GM12878 (cell line): ENCODE measurements at regions of chr5 and their contacts with region 1.

Region 1: DNA sequence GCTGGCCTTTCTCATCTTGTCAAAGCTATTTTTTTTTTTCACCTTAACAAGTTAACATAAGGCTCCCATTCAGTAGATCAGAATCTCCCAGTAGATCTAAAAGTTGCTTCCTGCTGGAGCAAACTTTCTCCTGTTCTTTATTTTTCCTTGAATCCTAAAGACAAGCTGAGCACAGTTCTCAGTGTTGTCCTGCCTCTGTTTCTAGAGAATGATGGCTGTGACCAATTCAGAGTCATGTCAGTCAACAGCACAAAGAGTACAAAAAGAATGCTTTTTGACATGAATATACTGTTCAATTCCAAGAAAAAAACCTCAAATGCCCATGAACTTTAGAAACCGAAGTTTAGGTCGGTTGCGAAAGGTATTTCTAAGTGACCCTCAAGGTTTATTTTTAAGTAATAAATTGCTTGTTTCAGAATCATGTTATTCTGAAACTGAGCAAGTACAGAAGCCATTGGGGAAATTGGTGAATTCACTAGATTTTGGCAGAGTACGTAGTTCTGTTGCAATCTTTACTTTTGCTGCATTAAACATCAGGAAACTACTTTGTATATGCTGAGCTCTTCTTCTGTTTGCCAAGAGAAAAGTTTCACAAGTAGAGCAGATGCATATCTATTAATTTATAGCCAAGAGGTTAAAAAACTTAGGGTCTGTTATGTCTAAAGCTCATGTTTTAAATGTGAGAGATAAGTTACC is 161.7 kb upstream of the RPS23 start:
- DNase-seq: no peak
- ATAC-seq: no peak
- H3K4me3 ChIP-seq: no peak overlapping the region
- H3K27ac ChIP-seq: no peak overlapping the region
- H3K4me1 ChIP-seq: no peaks in the 10 kb centered on the region
- H3K27me3 ChIP-seq: no peaks in the 10 kb centered on the region
- CTCF ChIP-seq: no peak
- EP300 ChIP-seq: no peak
- POLR2A ChIP-seq: no peak
- RAD21 ChIP-seq: no peak

Region 2: DNA sequence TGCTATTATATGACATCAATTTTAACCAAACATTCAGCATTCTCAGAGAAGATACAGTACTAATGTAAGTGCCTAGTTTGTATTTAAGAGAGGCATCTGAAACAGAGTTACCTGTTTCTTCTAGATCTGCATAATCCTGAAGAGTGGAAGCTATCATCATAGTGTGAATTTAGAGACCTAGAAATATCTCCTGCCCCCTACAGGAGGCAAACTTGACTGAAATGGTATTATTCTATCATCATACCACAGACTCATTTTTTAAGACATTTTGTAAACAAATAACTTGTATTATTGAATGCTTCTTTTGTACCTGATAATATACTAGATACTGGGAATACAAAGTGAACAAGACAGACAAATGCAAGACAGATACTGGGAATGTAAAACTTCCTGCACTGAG is 55.0 kb after region 1 on chr5:
- CTCF ChIA-PET with region 1: no interaction called
- POLR2A ChIA-PET with region 1: no interaction called
- RAD21 ChIA-PET with region 1: no interaction called
- SMC1A ChIA-PET with region 1: no interaction called
- in situ Hi-C with region 1: no loop called
- intact Hi-C with region 1: loop called (anchors 10 kb)
- DNase-seq: no peak
- ATAC-seq: no peak
- H3K4me3 ChIP-seq: no peak overlapping the region
- H3K27ac ChIP-seq: no peak overlapping the region
- H3K4me1 ChIP-seq: no peaks in the 10 kb centered on the region
- H3K27me3 ChIP-seq: no peaks in the 10 kb centered on the region
- CTCF ChIP-seq: peak in 1 of 3 experiments; percentile 15; a peak in 2 of 6 replicates
- EP300 ChIP-seq: no peak
- POLR2A ChIP-seq: no peak
- RAD21 ChIP-seq: no peak